WTC11 (cell line): ENCODE measurements at regions of chr3 and their contacts with region 1.

Region 1: DNA sequence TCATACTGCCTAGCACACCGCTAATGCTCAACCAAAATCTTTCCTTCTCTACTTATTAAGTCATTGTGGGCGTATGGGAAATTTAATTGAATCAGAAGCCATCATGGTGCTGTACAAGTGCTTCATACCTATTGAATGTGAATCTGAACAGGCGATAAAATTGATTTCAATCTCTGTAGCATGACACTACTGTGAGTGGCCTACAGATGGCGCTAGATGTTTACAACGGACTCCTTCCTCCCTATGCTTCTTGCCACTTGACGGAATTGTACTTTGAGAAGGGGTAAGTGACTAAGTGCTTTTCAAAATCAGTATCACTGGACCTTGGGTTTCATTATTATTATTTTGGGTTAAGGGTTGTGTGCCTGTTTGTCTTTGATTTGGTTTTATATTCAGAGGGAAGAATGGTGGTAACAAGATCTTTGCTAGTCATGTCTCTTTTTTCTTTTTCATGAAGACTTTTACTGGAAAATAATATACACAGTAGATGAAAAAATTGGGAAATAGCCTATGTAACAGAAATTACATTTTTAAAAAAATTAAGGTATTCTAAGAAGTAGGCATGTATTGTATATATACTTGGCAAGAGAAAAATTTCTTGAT is 35.4 kb downstream of the ACP3 start:
- DNase-seq: peak; percentile 76
- ATAC-seq: peak; percentile 80
- H3K4me3 Mint-ChIP-seq: no peak overlapping the region
- H3K27ac Mint-ChIP-seq: no peak overlapping the region
- H3K4me1 Mint-ChIP-seq: peaks cover 28% of the 10 kb centered on the region
- H3K27me3 Mint-ChIP-seq: no peaks in the 10 kb centered on the region
- CTCF ChIP-seq: peak; percentile 81

Region 2: DNA sequence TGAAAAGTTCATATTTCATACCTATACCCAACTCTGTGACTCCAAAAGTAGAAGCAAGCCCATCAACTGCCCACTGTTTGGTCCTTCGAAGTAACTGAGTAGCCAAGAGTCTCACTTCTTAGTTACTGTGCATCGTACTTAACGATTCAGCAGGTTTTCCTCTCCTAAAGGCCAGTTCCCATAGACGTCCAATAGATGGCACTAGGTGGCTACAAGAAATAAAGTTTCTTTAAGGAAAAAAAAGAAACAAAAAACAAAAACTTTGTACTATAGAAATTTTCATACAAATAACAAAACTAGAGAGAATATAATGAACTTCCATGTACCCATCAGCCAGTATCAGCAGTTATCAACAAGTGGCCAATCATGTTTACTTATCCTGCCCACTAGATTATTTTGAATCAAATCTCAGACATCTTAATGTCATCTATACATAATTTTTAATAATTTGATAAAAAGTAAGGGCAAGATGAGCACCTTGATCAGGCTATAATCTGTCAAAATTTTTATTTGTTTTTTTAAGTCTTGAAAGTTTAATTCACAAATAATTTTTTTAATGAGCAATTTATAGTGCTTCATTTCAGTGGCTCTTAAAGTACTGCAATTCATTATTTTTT is 99.3 kb before region 1 on chr3:
- CTCF ChIA-PET with region 1: interaction called, 20 read pairs
- POLR2A ChIA-PET with region 1: no interaction called
- DNase-seq: no peak
- ATAC-seq: peak; percentile 74
- H3K4me3 Mint-ChIP-seq: no peak overlapping the region
- H3K27ac Mint-ChIP-seq: no peak overlapping the region
- H3K4me1 Mint-ChIP-seq: peaks cover 6% of the 10 kb centered on the region
- H3K27me3 Mint-ChIP-seq: peaks cover 3% of the 10 kb centered on the region; the same call in 1 of the 2 replicates
- CTCF ChIP-seq: peak; percentile 43

Region 3: GRCh38 chr3:132325103-132325606 is 27.5 kb before region 1 on chr3:
- CTCF ChIA-PET with region 1: no interaction called
- POLR2A ChIA-PET with region 1: no interaction called
- DNase-seq: no peak
- ATAC-seq: no peak
- H3K4me3 Mint-ChIP-seq: no peak overlapping the region
- H3K27ac Mint-ChIP-seq: no peak overlapping the region
- H3K4me1 Mint-ChIP-seq: peaks cover 18% of the 10 kb centered on the region
- H3K27me3 Mint-ChIP-seq: no peaks in the 10 kb centered on the region
- CTCF ChIP-seq: no peak

Region 4: GRCh38 chr3:132380920-132381319 is 28.3 kb after region 1 on chr3:
- CTCF ChIA-PET with region 1: interaction called, 17 read pairs
- POLR2A ChIA-PET with region 1: no interaction called
- DNase-seq: no peak
- ATAC-seq: no peak
- H3K4me3 Mint-ChIP-seq: no peak overlapping the region
- H3K27ac Mint-ChIP-seq: peak overlapping the region; percentile 100
- H3K4me1 Mint-ChIP-seq: peaks cover 65% of the 10 kb centered on the region
- H3K27me3 Mint-ChIP-seq: no peaks in the 10 kb centered on the region; the same call in 1 of the 2 replicates
- CTCF ChIP-seq: no peak

Region 5: DNA sequence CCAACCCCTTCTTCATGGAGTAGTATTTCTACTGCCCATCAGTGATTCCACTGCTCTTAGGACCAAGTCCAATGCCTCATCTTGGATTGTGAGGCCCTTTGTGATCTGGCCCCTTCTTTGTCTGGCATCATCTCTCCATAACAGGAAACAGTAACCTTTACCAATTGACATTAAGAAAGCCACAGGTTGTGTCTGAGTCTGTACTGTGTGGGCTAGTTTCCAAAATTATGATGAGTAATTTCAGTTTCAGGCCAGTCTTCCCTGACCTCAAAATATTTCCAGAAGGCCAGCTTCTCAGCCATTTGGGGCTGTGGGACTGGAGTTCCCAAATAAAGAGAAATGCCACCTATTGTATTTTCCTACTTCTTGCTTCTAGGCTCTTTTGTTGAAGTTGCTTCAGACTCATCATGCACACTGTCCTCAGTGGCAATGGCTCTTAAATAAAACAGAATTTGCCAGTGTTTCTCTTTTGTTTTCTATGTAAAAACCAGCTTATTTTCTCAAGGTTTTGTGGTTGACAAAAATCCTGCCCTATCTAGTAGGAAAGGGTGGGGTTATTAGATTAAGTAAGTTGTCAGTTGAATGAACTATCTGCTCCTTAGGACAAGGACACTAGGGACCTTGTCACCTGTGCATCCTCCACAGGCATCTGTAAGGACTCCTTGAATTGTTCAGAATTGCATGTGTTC is 197.4 kb after region 1 on chr3:
- CTCF ChIA-PET with region 1: no interaction called
- POLR2A ChIA-PET with region 1: no interaction called
- DNase-seq: no peak
- ATAC-seq: no peak
- H3K4me3 Mint-ChIP-seq: no peak overlapping the region
- H3K27ac Mint-ChIP-seq: no peak overlapping the region
- H3K4me1 Mint-ChIP-seq: peaks cover 13% of the 10 kb centered on the region
- H3K27me3 Mint-ChIP-seq: no peaks in the 10 kb centered on the region
- CTCF ChIP-seq: no peak